ENCODE measurements at regions of chr1 and their contacts with region 1.

Region 1: GRCh38 chr1:26500488-26501175 is 28.4 kb downstream of the HMGN2 start:
- DNase-seq: peak; percentile 92 to 97 (median 96)
- ATAC-seq: peak; percentile 85
- H3K4me3 ChIP-seq: peak overlapping the region; percentile 55
- H3K27ac ChIP-seq: peak overlapping the region; percentile 83
- H3K4me1 ChIP-seq: peaks cover 13 to 29% of the 10 kb centered on the region in 2 experiments
- H3K27me3 ChIP-seq: no peaks in the 10 kb centered on the region
- CTCF ChIP-seq: no peak
- EP300 ChIP-seq: no peak; the same call in 1 of the 2 replicates
- POLR2A ChIP-seq: no peak
- RAD21 ChIP-seq: no peak

Region 2: GRCh38 chr1:26472901-26473845 is 27.5 kb before region 1 on chr1:
- CTCF ChIA-PET with region 1: no interaction called
- POLR2A ChIA-PET with region 1: interaction called, 11 read pairs
- in situ Hi-C with region 1: no loop called
- intact Hi-C with region 1: no loop called
- DNase-seq: peak; percentile 98 to 99 (median 98)
- ATAC-seq: peak; percentile 80
- H3K4me3 ChIP-seq: peak overlapping the region; percentile 95
- H3K27ac ChIP-seq: peak overlapping the region; percentile 100
- H3K4me1 ChIP-seq: peaks cover 29 to 30% of the 10 kb centered on the region in 2 experiments; a peak in 4 of 5 replicates
- H3K27me3 ChIP-seq: no peaks in the 10 kb centered on the region
- CTCF ChIP-seq: no peak
- EP300 ChIP-seq: peak; percentile 48
- POLR2A ChIP-seq: no peak
- RAD21 ChIP-seq: no peak

Region 3: DNA sequence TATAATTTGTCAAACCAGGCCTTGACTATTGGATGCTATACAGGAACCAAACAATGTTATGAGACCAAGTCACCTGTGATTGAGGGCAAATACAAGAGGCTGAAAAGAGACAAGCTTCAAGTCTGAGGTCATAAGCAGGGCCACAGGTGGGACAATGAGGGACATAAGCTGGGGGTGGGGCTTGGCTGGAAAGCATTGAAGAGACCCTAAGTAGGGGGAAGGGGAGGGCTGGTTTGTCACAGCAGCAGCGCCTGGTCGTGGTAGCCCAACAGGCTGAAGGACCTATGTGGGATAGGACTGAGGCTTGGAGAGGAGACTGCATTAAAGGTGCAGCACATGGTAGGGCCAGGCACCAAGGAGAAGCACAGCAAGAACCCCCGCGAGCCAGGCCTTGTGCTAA is 10.5 kb before region 1 on chr1:
- CTCF ChIA-PET with region 1: no interaction called
- POLR2A ChIA-PET with region 1: interaction called, 18 read pairs
- in situ Hi-C with region 1: no loop called
- intact Hi-C with region 1: no loop called
- DNase-seq: no peak
- ATAC-seq: no peak
- H3K4me3 ChIP-seq: no peak overlapping the region
- H3K27ac ChIP-seq: no peak overlapping the region
- H3K4me1 ChIP-seq: peaks cover 5 to 8% of the 10 kb centered on the region in 2 experiments; a peak in 4 of 5 replicates
- H3K27me3 ChIP-seq: no peaks in the 10 kb centered on the region
- CTCF ChIP-seq: no peak
- EP300 ChIP-seq: no peak
- POLR2A ChIP-seq: no peak
- RAD21 ChIP-seq: no peak

Region 4: GRCh38 chr1:26529655-26530409 is 29.2 kb after region 1 on chr1 and contains the start of gene RPS6KA1:
- CTCF ChIA-PET with region 1: interaction called, 4 read pairs
- POLR2A ChIA-PET with region 1: interaction called, 8 read pairs
- in situ Hi-C with region 1: no loop called
- intact Hi-C with region 1: loop called (anchors 2 kb)
- DNase-seq: peak; percentile 84 to 99 (median 98)
- ATAC-seq: peak; percentile 86
- H3K4me3 ChIP-seq: peak within 1 kb of the TSS; percentile 87
- H3K27ac ChIP-seq: peak within 1 kb of the TSS; percentile 70
- H3K4me1 ChIP-seq: peaks cover 35 to 44% of the 10 kb centered on the region in 2 experiments
- H3K27me3 ChIP-seq: 0 out of 5 replicates have a peak, but pooled peaks cover 0 to 4% of the 10 kb centered on the region in 2 experiments
- CTCF ChIP-seq: peak in 1 of 3 experiments; percentile 9; a peak in 1 of 6 replicates
- EP300 ChIP-seq: no peak
- POLR2A ChIP-seq: no peak; the same call in 1 of the 2 replicates
- RAD21 ChIP-seq: no peak
- polyA plus RNA-seq, gene RPS6KA1: 2.4 to 2.9 TPM

Region 5: DNA sequence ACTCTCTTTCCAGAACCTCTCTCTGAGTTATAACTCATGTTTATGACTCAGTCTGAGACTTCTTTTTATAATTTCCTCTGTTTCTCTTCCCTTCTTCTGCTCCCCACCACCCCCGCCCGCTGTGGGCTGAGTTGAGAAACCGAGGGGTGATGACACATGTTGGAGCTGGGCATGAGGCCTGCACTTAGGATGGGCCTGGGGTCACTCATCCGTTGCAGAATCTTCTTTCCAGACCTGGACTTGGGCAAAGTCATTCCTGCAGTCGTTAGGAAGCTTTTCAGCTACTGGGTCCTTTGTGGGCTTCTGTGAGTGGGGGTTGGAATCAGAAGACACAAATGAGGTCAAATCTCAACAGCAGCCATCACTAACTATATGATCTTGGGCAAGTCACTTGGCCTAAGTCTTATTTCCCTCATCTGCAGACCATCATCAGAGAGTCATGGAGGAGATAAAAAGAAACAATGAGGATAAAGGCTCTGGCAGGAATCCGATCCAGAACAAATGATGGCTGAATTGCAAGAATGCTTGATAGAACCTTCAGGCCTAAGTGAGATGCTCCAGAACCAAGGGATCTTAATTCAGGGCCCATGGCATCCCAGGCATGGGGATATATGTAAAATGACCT is 82.3 kb after region 1 on chr1:
- CTCF ChIA-PET with region 1: no interaction called
- POLR2A ChIA-PET with region 1: interaction called, 4 read pairs
- in situ Hi-C with region 1: no loop called
- intact Hi-C with region 1: loop called (anchors 5 kb)
- DNase-seq: no peak
- ATAC-seq: no peak
- H3K4me3 ChIP-seq: no peak overlapping the region
- H3K27ac ChIP-seq: no peak overlapping the region
- H3K4me1 ChIP-seq: peaks cover 0 to 7% of the 10 kb centered on the region in 2 experiments; a peak in 1 of 5 replicates
- H3K27me3 ChIP-seq: no peaks in the 10 kb centered on the region
- CTCF ChIP-seq: no peak
- EP300 ChIP-seq: no peak
- POLR2A ChIP-seq: no peak
- RAD21 ChIP-seq: no peak